Activated naive CD4-positive, alpha-beta T cell treated with anti-CD3 and anti-CD28 coated beads, Interleukin-2, amount 10 ng/mL, durations not matched to agents 7 days and 5 days (primary cell): ENCODE measurements at regions of chr1 and their contacts with region 1.

Region 1: DNA sequence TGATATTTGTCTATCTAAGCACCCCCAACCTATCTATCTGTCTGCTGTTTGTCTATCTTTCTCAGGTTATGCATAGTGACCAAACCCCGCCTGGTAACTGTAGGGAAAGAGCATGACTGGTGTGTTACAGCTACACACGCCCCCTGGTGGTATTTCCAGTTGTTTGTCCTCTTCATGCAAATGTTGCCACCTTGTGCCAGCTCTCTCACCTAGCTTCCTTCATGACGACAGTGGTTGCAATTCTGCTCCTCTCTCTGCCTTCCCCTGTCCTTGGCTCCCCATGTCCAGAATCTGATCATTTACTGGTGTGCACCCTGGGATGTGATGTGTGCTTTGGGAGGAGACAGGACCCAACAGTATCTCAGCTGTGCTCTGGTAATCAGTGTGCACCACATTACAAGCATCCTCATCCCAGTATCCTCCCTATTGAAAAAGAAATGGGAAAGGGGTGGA is 8.1 kb upstream of the INKA2 start:
- DNase-seq: peak; percentile 83
- H3K4me3 Mint-ChIP-seq: no peak overlapping the region
- H3K27ac Mint-ChIP-seq: no peak overlapping the region
- H3K4me1 Mint-ChIP-seq: peaks cover 10% of the 10 kb centered on the region
- H3K27me3 Mint-ChIP-seq: peaks cover 17% of the 10 kb centered on the region

Region 2: DNA sequence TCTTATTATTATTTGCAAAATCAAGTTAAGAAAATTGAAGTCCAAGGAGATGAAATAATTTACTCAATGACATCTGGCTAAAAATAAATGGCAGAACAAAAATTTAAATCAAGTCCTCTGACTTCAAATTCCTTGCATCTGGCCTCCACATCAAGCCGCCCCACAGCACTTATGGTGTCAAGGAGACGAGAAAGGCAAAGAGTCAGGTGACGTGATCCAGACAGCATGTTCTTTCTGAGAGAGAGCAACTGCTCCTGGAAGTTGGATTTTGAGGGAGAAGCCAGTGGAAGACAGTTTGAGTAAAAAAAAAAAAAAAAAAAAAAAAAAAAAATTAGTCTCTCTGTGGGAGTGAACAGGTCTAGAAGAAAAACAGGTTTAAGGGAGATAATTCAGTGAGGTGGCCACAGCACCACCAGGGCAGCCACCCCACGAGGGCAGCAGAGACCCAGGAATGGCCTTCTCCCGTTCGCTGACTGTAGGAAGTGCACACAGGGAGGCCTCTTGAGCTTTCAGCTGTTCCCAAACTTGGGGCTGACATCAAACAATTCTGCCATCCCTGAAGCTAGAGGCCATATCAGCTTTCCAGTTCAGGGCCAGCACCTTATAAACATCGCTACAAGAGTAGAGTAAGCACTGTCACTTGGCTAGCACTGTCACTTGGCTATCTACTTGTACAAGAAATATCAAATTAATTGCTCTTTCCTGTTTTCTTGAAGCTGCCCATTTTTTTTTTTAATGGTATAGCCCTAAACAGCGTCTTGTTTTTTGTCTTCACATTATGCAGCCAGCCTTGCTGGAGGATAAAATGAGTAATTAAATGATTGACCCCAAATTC is 265.7 kb before region 1 on chr1:
- CTCF ChIA-PET with region 1: interaction called, 19 read pairs
- DNase-seq: peak; percentile 79
- H3K4me3 Mint-ChIP-seq: no peak overlapping the region
- H3K27ac Mint-ChIP-seq: no peak overlapping the region
- H3K4me1 Mint-ChIP-seq: peaks cover 46% of the 10 kb centered on the region
- H3K27me3 Mint-ChIP-seq: peaks cover 21% of the 10 kb centered on the region

Region 3: GRCh38 chr1:111639602-111640198 is 107.6 kb before region 1 on chr1:
- CTCF ChIA-PET with region 1: no interaction called
- DNase-seq: no peak
- H3K4me3 Mint-ChIP-seq: no peak overlapping the region
- H3K27ac Mint-ChIP-seq: no peak overlapping the region
- H3K4me1 Mint-ChIP-seq: peaks cover 39% of the 10 kb centered on the region
- H3K27me3 Mint-ChIP-seq: no peaks in the 10 kb centered on the region

Region 4: DNA sequence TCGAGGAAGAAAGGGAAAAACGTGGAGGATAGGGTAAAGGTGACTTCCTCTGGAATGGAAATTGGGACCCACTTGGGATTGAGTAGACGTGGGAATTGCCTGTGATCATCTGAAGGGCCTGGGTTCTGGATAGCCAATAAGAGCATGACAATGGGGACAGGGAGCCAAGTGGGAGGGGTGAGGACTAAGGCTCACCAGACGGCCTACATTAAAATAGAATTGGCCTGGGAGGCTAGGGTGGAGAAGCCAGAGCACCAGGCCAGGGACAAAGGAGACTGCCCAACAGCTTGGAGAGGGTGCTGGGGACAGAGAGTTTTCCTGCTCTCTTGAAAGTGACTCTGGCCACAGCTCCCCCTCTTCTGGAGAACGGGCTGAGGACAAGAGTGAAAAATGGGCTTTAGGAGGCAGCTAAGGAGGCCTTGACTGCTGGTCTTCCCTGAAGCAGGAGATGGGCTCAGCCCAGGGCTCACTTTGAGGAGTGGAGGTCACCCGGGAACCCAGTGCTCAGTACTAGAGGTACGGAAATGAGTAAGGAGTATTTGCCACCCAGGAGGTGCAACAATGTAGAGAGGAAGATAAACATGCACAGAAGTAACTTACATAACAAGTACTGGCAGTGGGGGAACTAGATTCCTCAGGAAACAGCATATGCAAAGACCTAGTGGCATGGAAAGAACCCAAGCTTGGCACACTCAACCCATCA is 26.9 kb before region 1 on chr1:
- CTCF ChIA-PET with region 1: interaction called, 105 read pairs
- DNase-seq: no peak
- H3K4me3 Mint-ChIP-seq: peak overlapping the region; percentile 5
- H3K27ac Mint-ChIP-seq: peak overlapping the region; percentile 50
- H3K4me1 Mint-ChIP-seq: peaks cover 8% of the 10 kb centered on the region
- H3K27me3 Mint-ChIP-seq: no peaks in the 10 kb centered on the region